Activated CD4-positive, alpha-beta memory T cell treated with anti-CD3 and anti-CD28 coated beads for 36 hours (primary cell): ENCODE measurements at regions of chr6 and their contacts with region 1.

Region 1: DNA sequence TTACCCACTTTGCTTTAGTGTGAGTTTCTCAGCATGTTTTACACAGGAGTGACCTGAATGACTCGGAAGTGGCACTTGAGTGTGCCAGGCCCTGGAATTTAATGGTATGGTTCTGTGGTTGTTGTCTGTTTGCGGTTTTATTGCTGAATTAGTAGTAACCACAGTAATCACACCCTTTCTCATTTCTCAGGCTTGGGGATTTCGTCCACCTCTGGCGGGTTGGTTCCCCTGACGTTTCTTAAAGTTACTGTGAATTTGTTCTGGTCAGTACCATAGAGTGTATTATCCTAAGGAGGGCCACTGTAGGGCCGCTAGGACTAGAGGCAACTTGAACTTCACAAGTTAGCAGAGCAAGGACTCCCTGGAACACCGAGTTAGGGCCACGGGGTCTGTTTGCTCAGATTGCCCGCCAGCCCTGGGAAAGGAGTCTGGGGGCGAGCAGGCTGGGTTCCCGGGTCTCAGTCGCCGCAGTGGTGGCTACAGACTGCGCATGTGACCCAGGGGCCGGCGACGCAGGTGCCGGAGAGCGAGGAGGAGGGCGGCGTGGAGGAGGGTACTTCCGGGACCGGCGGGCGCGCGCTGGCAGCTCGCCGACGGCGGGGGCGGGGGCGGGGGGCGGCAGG is 546 bp upstream of the KLHL32 start:
- DNase-seq: no peak
- H3K4me3 Mint-ChIP-seq: peak overlapping the region; percentile 77
- H3K27ac Mint-ChIP-seq: peak overlapping the region; percentile 77
- H3K4me1 Mint-ChIP-seq: peaks cover 37% of the 10 kb centered on the region
- H3K27me3 Mint-ChIP-seq: no peaks in the 10 kb centered on the region

Region 2: DNA sequence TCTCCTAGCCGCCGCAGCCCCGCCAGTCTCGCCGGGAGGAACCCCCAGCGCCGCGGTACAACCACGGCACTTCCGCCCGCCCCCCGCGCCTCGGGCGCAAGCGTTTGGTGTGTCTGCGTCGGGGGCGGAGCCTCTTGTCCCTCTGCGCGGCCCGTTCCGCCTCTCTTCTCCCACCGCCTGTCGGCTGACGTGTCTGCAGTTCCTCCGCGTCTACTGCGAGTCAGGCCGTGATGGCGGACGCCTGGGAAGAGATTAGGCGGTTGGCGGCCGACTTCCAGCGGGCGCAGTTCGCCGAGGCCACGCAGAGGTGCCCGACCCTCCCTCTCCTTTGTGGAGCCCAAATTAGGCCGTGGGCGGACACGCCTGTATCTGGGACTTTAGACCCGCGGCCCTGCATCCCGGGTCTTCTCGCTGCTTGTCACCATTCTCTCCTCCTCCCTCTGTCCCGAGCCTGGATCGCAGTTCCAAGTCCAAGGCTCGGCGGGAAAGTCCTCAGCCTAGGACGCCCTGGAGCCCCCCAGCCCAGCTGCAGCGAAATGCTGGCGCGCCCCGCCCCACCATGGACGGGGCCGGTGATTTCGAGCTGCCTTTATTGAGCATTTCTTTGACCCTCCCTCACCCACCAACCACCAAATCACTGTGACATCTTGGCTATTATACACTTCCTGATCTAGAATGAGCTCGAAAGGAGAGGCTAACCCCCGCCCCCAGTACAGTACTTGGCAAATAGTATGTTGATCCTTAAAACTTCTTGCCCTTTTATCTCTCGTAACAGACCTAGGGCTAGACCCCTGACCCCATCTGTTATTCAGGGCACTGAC is 402.1 kb before region 1 on chr6 and contains the start of gene UFL1:
- CTCF ChIA-PET with region 1: no interaction called
- POLR2A ChIA-PET with region 1: no interaction called
- intact Hi-C with region 1: loop called (anchors 1 kb)
- DNase-seq: peak; percentile 94
- H3K4me3 Mint-ChIP-seq: peak within 1 kb of the TSS; percentile 98
- H3K27ac Mint-ChIP-seq: peak within 1 kb of the TSS; percentile 99
- H3K4me1 Mint-ChIP-seq: peaks cover 16% of the 10 kb centered on the region
- H3K27me3 Mint-ChIP-seq: no peaks in the 10 kb centered on the region
- total RNA-seq, gene UFL1: 28.8 to 29.7 TPM

Region 3: GRCh38 chr6:96907498-96907897 is 16.5 kb before region 1 on chr6:
- CTCF ChIA-PET with region 1: interaction called, 13 read pairs
- POLR2A ChIA-PET with region 1: interaction called, 29 read pairs
- intact Hi-C with region 1: loop called (anchors 1 kb)
- DNase-seq: peak; percentile 75
- H3K4me3 Mint-ChIP-seq: no peak overlapping the region
- H3K27ac Mint-ChIP-seq: peak overlapping the region; percentile 21
- H3K4me1 Mint-ChIP-seq: peaks cover 26% of the 10 kb centered on the region
- H3K27me3 Mint-ChIP-seq: peaks cover 34% of the 10 kb centered on the region

Region 4: GRCh38 chr6:96939007-96939805 is 15.2 kb after region 1 on chr6:
- CTCF ChIA-PET with region 1: interaction called, 4 read pairs
- POLR2A ChIA-PET with region 1: interaction called, 3 read pairs
- intact Hi-C with region 1: loop called (anchors 2 kb)
- DNase-seq: peak; percentile 47
- H3K4me3 Mint-ChIP-seq: no peak overlapping the region
- H3K27ac Mint-ChIP-seq: no peak overlapping the region
- H3K4me1 Mint-ChIP-seq: peaks cover 9% of the 10 kb centered on the region
- H3K27me3 Mint-ChIP-seq: no peaks in the 10 kb centered on the region

Region 5: DNA sequence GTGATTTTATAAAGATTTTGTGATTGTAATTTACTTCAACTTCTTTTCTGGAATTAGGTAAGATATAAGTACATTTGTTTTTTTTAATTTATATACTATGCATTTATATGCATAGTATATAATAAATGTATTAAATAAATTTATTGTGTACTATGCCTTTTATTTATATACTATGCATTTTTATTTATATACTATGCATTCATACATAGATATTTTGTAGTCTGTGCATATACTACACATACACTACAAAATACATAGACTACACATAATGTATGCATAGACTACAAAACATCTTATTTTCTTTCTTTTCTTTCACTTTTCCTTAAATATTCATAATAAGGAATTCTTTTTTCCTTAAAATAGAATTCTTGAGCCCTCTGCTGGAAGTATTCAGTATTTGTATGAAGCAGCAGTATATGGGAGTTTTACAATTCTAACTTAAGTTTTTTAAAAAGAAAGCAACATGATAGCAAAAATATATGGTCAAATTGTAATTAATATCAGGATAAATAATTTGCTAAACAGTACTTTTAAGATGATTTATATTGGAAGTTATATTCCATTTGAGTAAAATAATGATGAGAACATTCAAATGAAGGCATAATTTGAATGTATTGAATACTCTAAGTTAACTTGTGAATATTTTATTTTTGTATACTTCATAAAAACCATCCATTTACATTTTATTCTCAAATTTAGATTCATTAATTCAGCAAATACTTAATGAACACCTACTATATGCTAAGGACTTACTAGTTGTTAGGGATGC is 129.8 kb after region 1 on chr6:
- CTCF ChIA-PET with region 1: interaction called, 5 read pairs
- POLR2A ChIA-PET with region 1: interaction called, 3 read pairs
- intact Hi-C with region 1: loop called (anchors 1 kb)
- DNase-seq: no peak
- H3K4me3 Mint-ChIP-seq: no peak overlapping the region
- H3K27ac Mint-ChIP-seq: no peak overlapping the region
- H3K4me1 Mint-ChIP-seq: peaks cover 15% of the 10 kb centered on the region
- H3K27me3 Mint-ChIP-seq: no peaks in the 10 kb centered on the region

Region 6: GRCh38 chr6:97068211-97068610 is 144.2 kb after region 1 on chr6:
- CTCF ChIA-PET with region 1: no interaction called
- POLR2A ChIA-PET with region 1: no interaction called
- intact Hi-C with region 1: no loop called
- DNase-seq: no peak
- H3K4me3 Mint-ChIP-seq: no peak overlapping the region
- H3K27ac Mint-ChIP-seq: no peak overlapping the region
- H3K4me1 Mint-ChIP-seq: no peaks in the 10 kb centered on the region
- H3K27me3 Mint-ChIP-seq: no peaks in the 10 kb centered on the region